Activated CD8-positive, alpha-beta T cell treated with anti-CD3 and anti-CD28 coated beads, Interleukin-2, amount 10 ng/mL, durations not matched to agents 7 days and 5 days (primary cell): ENCODE measurements at regions of chr2 and their contacts with region 1.

Region 1: GRCh38 chr2:196143730-196144131 is 27.6 kb downstream of the STK17B start:
- DNase-seq: no peak
- ATAC-seq: peak; percentile 17
- H3K4me3 Mint-ChIP-seq: peak overlapping the region; percentile 28
- H3K27ac Mint-ChIP-seq: peak overlapping the region; percentile 72
- H3K4me1 Mint-ChIP-seq: peaks cover 74% of the 10 kb centered on the region
- H3K27me3 Mint-ChIP-seq: no peaks in the 10 kb centered on the region

Region 2: DNA sequence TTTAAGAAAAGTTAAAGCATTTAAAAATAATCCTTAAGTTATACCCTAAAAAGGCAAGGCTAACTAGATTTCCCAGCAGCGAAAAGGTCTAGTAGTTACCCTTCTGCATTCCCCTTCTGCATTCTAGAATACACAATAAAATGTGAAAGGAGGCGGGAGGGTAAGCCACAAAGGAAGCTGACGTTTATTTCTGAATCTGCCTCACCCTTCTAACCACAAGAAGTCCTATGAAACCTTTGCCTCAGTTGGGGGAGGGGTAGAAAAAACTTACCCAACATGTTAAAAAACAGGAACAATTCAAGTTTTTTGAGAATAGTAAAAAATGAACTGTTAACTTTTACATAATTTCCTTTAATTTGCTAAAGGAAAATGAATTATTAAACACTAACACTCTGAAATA is 16.4 kb after region 1 on chr2:
- CTCF ChIA-PET with region 1: interaction called, 4 read pairs
- POLR2A ChIA-PET with region 1: interaction called, 11 read pairs
- DNase-seq: peak; percentile 88
- ATAC-seq: peak; percentile 35
- H3K4me3 Mint-ChIP-seq: peak overlapping the region; percentile 66
- H3K27ac Mint-ChIP-seq: peak overlapping the region; percentile 82
- H3K4me1 Mint-ChIP-seq: peaks cover 50% of the 10 kb centered on the region
- H3K27me3 Mint-ChIP-seq: no peaks in the 10 kb centered on the region

Region 3: GRCh38 chr2:196482119-196483065 is 338.7 kb after region 1 on chr2:
- CTCF ChIA-PET with region 1: no interaction called
- POLR2A ChIA-PET with region 1: no interaction called
- DNase-seq: no peak
- ATAC-seq: no peak
- H3K4me3 Mint-ChIP-seq: no peak overlapping the region
- H3K27ac Mint-ChIP-seq: no peak overlapping the region
- H3K4me1 Mint-ChIP-seq: no peaks in the 10 kb centered on the region
- H3K27me3 Mint-ChIP-seq: peaks cover 35% of the 10 kb centered on the region